Heart right ventricle (tissue), 16 donors: ENCODE measurements at regions of chr16 and their contacts with region 1.

Region 1: GRCh38 chr16:75653922-75654321 is 6.3 kb downstream of the TERF2IP start:
- DNase-seq: no peak
- ATAC-seq: no peak
- H3K4me3 ChIP-seq: no peak overlapping the region
- H3K27ac ChIP-seq: no peak overlapping the region
- H3K4me1 ChIP-seq: peaks cover 0 to 70% (median 46%) of the 10 kb centered on the region in 9 donors
- H3K27me3 ChIP-seq: no peaks in the 10 kb centered on the region
- CTCF ChIP-seq: no peak

Region 2: GRCh38 chr16:75603241-75603640 is 50.7 kb before region 1 on chr16:
- intact Hi-C with region 1: no loop called
- DNase-seq: no peak
- ATAC-seq: no peak
- H3K4me3 ChIP-seq: no peak overlapping the region
- H3K27ac ChIP-seq: no peak overlapping the region
- H3K4me1 ChIP-seq: peaks cover 0 to 7% (median 0%) of the 10 kb centered on the region in 9 donors
- H3K27me3 ChIP-seq: no peaks in the 10 kb centered on the region
- CTCF ChIP-seq: no peak

Region 3: GRCh38 chr16:77190478-77191258 is 1536.7 kb after region 1 on chr16 and contains the start of gene MON1B:
- intact Hi-C with region 1: loop called in 1 of 10 experiments (anchors 10 kb)
- DNase-seq: peak; percentile 95 to 98
- ATAC-seq: peak; percentile 99 to 100 (median 100)
- H3K4me3 ChIP-seq: peak within 1 kb of the TSS; percentile 77 to 91 (median 84)
- H3K27ac ChIP-seq: peak within 1 kb of the TSS; percentile 83 to 98 (median 93)
- H3K4me1 ChIP-seq: peaks cover 6 to 25% (median 16%) of the 10 kb centered on the region in 9 donors
- H3K27me3 ChIP-seq: no peaks in the 10 kb centered on the region
- CTCF ChIP-seq: peak in 2 of 9 donors; percentile 28 to 38
- total RNA-seq, gene MON1B: 15.8 to 26.4 (median 17.6) TPM